Lower leg skin (tissue), 4 donors: ENCODE measurements at regions of chr3 and their contacts with region 1.

Region 1: GRCh38 chr3:70874899-70875298 is 562.5 kb upstream of the MDFIC2 start:
- DNase-seq: no peak
- H3K4me3 ChIP-seq: no peak overlapping the region
- CTCF ChIP-seq: no peak
- POLR2A ChIP-seq: no peak

Region 2: DNA sequence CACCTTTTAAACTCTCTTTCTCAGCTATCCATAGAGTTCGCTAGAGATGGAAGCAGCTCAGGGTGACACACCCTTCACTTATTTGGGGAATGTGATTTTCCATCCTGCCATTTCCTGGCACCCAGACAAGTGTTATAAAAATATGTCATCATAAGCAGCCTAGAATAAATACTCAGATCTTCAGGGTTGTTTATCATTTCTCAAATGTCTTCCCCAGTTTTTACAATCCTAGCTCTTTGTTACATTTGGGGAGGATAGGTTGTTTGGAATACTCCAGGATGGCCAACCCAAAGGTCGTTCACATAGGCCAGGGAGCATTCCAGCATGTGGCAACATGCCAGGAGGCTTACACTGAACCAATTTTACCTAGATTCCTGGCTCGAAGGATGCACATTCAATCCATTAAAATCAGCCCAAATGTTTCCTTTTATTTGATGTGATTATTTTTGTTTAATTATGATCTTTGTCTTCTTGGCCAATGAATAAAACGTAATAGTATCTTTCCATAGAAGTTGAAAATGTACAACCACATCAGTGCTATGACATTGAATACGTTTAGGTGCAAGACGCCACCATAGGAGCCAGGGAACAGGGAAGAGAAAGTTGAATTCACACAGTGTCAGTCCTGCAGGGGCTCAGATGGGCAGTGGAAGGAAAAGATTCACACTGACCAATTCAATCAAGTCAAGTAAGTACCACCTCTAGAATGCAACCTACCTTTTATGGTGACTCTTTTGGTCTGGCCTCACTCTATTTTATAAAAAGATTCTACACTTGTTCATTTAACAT is 24.8 kb before region 1 on chr3:
- intact Hi-C with region 1: loop called (anchors 1 kb)
- DNase-seq: peak in 1 of 2 donors; percentile 49
- H3K4me3 ChIP-seq: no peak overlapping the region
- CTCF ChIP-seq: no peak
- POLR2A ChIP-seq: no peak